Naive thymus-derived CD4-positive, alpha-beta T cell (primary cell): ENCODE measurements at regions of chr11 and their contacts with region 1.

Region 1: DNA sequence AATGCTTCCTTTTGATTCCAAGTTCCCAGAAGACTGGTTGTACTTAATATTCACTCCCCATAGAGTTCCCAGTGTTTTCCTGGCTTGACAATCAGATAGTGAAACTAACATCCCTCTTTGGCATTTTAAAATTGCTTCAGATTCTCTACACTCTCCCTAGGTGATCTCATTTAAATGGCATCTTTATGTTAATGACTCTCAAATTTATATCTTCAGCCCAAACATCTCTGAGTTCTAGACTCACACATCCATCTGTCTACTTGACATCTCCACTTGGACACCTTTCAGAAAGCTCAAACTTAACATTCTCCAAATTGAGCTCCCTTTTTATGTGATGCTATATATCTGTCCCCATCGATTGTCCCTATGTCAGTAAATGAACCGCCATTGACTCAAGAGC is 232.0 kb downstream of the NTM start:
- DNase-seq: no peak
- ATAC-seq: no peak
- H3K4me3 ChIP-seq: no peak overlapping the region
- H3K4me3 Mint-ChIP-seq: no peak overlapping the region
- H3K27ac ChIP-seq: no peak overlapping the region
- H3K27ac Mint-ChIP-seq: no peak overlapping the region
- H3K4me1 ChIP-seq: no peaks in the 10 kb centered on the region
- H3K4me1 Mint-ChIP-seq: no peaks in the 10 kb centered on the region
- H3K27me3 ChIP-seq: no peaks in the 10 kb centered on the region
- H3K27me3 Mint-ChIP-seq: no peaks in the 10 kb centered on the region

Region 2: GRCh38 chr11:131591051-131591461 is 11.4 kb before region 1 on chr11:
- CTCF ChIA-PET with region 1: interaction called, 10 read pairs
- POLR2A ChIA-PET with region 1: no interaction called
- intact Hi-C with region 1: no loop called
- DNase-seq: no peak
- ATAC-seq: no peak
- H3K4me3 ChIP-seq: no peak overlapping the region
- H3K4me3 Mint-ChIP-seq: no peak overlapping the region
- H3K27ac ChIP-seq: no peak overlapping the region
- H3K27ac Mint-ChIP-seq: no peak overlapping the region
- H3K4me1 ChIP-seq: no peaks in the 10 kb centered on the region
- H3K4me1 Mint-ChIP-seq: no peaks in the 10 kb centered on the region
- H3K27me3 ChIP-seq: peaks cover 0 to 3% of the 10 kb centered on the region in 2 donors
- H3K27me3 Mint-ChIP-seq: peaks cover 0 to 13% (median 0%) of the 10 kb centered on the region in 5 donors